Right cardiac atrium (tissue), 5 donors: ENCODE measurements at regions of chr22 and their contacts with region 1.

Region 1: DNA sequence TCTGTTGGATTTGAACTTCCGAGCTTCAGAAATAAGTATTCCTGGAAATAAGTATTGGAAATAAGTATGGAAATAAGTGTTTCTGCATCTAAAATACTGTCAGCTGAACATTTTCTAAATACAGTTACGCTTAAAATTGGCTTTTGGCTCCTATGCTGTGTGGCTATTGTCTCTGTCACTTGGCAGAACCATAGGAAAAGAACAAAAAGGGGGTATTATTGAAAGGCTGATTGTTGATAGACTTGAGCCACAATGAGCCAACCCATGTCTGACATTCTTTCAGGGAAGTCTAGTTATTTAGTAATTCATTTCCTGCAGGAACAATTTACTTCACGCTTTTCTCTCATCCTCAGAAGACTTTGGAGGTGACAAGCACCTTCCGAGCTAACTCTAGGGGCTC is 32.5 kb upstream of the LARGE1 start:
- DNase-seq: no peak
- ATAC-seq: no peak
- H3K4me3 ChIP-seq: no peak overlapping the region
- H3K27ac ChIP-seq: no peak overlapping the region
- H3K4me1 ChIP-seq: no peaks in the 10 kb centered on the region
- H3K27me3 ChIP-seq: no peaks in the 10 kb centered on the region

Region 2: DNA sequence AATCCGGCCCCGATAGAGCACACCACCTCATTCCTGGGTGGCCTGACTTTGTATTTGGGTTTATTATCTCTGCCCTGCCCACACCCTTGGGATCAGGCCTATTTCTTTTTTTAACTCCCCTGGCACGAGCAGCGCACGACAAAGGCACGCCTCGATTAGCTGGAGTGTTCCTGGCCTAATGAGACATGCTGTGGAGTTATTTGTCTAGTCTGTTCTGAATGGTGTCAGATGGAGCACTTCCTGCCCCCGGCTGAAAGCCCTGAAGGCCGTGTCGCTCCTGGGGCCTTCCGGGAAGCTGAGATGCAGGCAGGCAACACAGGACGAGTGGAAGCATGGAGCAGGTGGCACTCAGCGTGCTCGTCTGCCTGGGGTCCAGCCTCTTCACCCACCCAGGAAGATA is 79.6 kb before region 1 on chr22:
- intact Hi-C with region 1: no loop called
- DNase-seq: peak; percentile 38 to 74 (median 73)
- ATAC-seq: peak; percentile 83 to 90
- H3K4me3 ChIP-seq: no peak overlapping the region
- H3K27ac ChIP-seq: peak overlapping the region; percentile 78
- H3K4me1 ChIP-seq: peaks cover 25% of the 10 kb centered on the region
- H3K27me3 ChIP-seq: no peaks in the 10 kb centered on the region

Region 3: GRCh38 chr22:34001701-34002466 is 49.1 kb after region 1 on chr22:
- intact Hi-C with region 1: loop called in 1 of 4 experiments (anchors 5 kb)
- DNase-seq: no peak
- ATAC-seq: no peak
- H3K4me3 ChIP-seq: no peak overlapping the region
- H3K27ac ChIP-seq: no peak overlapping the region
- H3K4me1 ChIP-seq: no peaks in the 10 kb centered on the region
- H3K27me3 ChIP-seq: no peaks in the 10 kb centered on the region